Breast epithelium (tissue), 4 donors: ENCODE measurements at regions of chr20 and their contacts with region 1.

Region 1: GRCh38 chr20:6746901-6747609 is 20.4 kb upstream of the BMP2 start:
- DNase-seq: no peak
- H3K4me3 ChIP-seq: no peak overlapping the region
- H3K27ac ChIP-seq: no peak overlapping the region
- H3K4me1 ChIP-seq: no peaks in the 10 kb centered on the region
- H3K27me3 ChIP-seq: peaks cover 0 to 3% of the 10 kb centered on the region in 2 donors
- CTCF ChIP-seq: no peak
- POLR2A ChIP-seq: no peak

Region 2: DNA sequence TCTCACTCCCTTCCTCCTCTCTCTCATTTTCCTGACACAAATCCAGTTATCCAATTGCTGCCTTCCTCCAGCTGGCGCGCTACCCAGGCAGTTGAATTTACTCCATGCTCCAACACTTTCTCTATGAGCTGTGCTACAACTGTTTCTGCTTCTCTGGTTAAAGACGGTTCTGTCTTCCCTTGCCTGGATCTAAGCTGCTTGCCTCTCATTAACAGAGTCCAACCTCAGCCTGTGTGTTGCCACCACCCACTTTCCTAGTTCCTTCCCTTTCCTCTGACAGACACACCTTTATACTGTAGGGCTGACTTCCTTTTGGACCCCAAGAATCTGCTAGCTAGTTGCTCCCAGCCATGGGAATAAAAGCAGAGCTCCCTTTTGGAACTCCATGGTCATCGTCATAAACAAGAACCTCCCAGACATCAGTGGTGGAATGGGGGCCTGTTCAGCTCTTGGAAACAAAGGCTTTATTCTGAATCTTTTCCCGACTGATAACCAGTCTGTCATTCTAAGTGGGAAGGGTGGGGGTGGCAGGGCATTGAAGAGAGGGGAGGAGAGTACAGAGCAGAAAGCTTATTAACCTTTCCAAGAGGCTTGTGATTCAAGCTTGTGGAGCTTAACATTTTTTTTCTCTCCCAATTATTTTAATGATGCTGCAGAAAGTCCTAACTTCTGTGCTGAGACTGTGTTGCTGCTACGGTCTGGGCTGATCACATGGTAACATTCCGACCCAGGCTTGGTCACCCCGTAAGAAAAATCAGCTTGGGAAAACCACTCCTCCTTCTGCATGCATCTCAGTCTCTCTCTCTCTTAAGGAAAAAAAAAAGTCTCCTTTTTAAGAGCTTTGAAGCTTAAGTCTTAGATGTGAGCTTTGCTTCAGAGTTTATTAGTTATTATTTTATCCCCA is 10.9 kb before region 1 on chr20:
- intact Hi-C with region 1: loop called (anchors 1 kb)
- DNase-seq: no peak
- H3K4me3 ChIP-seq: no peak overlapping the region
- H3K27ac ChIP-seq: no peak overlapping the region
- H3K4me1 ChIP-seq: no peaks in the 10 kb centered on the region
- H3K27me3 ChIP-seq: no peaks in the 10 kb centered on the region
- CTCF ChIP-seq: no peak
- POLR2A ChIP-seq: no peak

Region 3: GRCh38 chr20:7571521-7572055 is 824.5 kb after region 1 on chr20:
- intact Hi-C with region 1: loop called (anchors 5 kb)
- DNase-seq: no peak
- H3K4me3 ChIP-seq: no peak overlapping the region
- H3K27ac ChIP-seq: no peak overlapping the region
- H3K4me1 ChIP-seq: no peaks in the 10 kb centered on the region
- H3K27me3 ChIP-seq: no peaks in the 10 kb centered on the region
- CTCF ChIP-seq: no peak
- POLR2A ChIP-seq: no peak